K562 (cell line): ENCODE measurements at regions of chr7 and their contacts with region 1.

Region 1: DNA sequence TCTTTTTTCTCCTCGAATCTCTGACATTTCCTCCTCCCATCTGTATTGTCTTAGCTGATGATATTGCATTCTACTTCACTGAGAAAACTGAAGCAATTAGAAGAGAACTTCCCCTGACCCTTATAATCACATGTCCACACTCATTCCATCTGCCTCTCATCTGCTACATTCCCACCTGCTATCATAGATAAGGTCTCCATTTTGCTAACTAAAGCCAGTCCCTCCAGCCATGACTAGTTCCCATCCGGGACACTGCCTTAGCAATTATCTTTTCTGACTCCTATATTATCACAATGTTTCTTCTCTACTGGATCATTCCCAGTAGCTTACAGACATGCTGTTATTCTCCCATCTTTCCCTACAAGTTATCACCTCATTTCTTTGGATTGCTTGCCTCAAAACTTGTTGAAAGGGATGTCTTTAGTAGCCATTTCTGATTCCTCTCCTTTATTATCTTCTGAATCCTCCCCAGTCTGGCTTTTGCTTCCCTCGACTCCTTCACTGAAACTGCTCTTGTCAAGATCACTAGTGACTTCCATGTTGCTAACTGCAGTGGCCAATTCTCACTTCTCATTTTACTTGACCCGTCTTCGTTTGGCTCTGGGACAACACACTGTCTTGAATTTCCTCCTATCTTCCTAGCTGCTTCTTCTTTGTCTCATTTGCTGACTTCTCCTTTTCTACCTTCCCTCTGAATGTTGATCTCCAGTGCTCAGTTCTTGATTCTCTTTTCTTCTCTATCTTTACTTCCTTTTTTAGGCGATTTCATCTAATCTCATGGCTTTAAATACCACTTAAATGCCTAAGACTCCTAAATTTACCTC is 35.9 kb downstream of the FZD1 start:
- DNase-seq: peak; percentile 79 to 95 (median 88)
- ATAC-seq: peak; percentile 92
- H3K4me3 ChIP-seq: no peak overlapping the region
- H3K27ac ChIP-seq: peak overlapping the region; percentile 90
- H3K4me1 ChIP-seq: peaks cover 12 to 24% of the 10 kb centered on the region in 2 experiments; a peak in 4 of 5 replicates
- H3K27me3 ChIP-seq: no peaks in the 10 kb centered on the region
- CTCF ChIP-seq: no peak
- EP300 ChIP-seq: peak; percentile 99
- POLR2A ChIP-seq: 0 out of 2 replicates have a peak, but pooled peaks have one; percentile 53
- RAD21 ChIP-seq: no peak; a peak in 1 of 4 replicates

Region 2: GRCh38 chr7:90346336-90347125 is 953.6 kb before region 1 on chr7 and contains the start of gene GTPBP10:
- CTCF ChIA-PET with region 1: no interaction called
- POLR2A ChIA-PET with region 1: no interaction called
- in situ Hi-C with region 1: no loop called
- intact Hi-C with region 1: loop called (anchors 5 kb)
- DNase-seq: peak; percentile 95 to 99 (median 97)
- ATAC-seq: peak; percentile 92
- H3K4me3 ChIP-seq: peak within 1 kb of the TSS; percentile 77
- H3K27ac ChIP-seq: peak within 1 kb of the TSS; percentile 95
- H3K4me1 ChIP-seq: peaks cover 8 to 14% of the 10 kb centered on the region in 2 experiments; a peak in 3 of 5 replicates
- H3K27me3 ChIP-seq: no peaks in the 10 kb centered on the region
- CTCF ChIP-seq: peak; percentile 86 to 95 (median 91)
- EP300 ChIP-seq: peak; percentile 8; the same call in 1 of the 2 replicates
- POLR2A ChIP-seq: peak; percentile 98
- RAD21 ChIP-seq: no peak
- polyA plus RNA-seq, gene GTPBP10: 87.7 to 87.9 TPM

Region 3: DNA sequence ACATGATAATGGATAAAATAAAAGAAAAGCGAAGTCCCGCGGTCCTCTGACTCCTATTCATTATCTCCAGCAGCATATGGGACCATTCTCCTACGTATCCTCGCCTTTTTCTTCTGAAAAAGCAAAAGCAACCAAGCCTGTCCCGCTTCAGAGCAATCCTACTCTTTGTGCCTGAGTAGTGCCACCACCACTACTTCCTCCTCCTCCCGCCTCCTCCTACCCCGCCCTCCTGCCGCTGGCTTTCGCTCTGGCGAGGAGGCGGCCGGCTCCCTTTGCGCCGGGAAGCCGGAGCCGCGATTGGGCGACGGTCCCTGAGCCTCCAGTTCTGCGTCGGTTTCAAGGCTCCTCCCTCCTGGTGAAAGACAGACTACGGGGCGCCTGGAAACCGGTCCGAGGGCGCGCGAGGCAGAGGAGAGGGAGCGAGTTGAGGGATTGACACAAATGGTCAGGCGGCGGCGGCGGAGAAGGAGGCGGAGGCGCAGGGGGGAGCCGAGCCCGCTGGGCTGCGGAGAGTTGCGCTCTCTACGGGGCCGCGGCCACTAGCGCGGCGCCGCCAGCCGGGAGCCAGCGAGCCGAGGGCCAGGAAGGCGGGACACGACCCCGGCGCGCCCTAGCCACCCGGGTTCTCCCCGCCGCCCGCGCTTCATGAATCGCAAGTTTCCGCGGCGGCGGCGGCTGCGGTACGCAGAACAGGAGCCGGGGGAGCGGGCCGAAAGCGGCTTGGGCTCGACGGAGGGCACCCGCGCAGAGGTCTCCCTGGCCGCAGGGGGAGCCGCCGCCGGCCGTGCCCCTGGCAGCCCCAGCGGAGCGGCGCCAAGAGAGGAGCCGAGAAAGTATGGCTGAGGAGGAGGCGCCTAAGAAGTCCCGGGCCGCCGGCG is 35.9 kb before region 1 on chr7 and contains the start of gene FZD1:
- CTCF ChIA-PET with region 1: no interaction called
- POLR2A ChIA-PET with region 1: interaction called, 8 read pairs
- in situ Hi-C with region 1: no loop called
- intact Hi-C with region 1: loop called (anchors 1 kb)
- DNase-seq: peak; percentile 90 to 99 (median 91)
- ATAC-seq: peak; percentile 94
- H3K4me3 ChIP-seq: peak within 1 kb of the TSS; percentile 80
- H3K27ac ChIP-seq: peak within 1 kb of the TSS; percentile 77
- H3K4me1 ChIP-seq: peaks cover 3 to 37% of the 10 kb centered on the region in 2 experiments; a peak in 3 of 5 replicates
- H3K27me3 ChIP-seq: no peaks in the 10 kb centered on the region
- CTCF ChIP-seq: no peak
- EP300 ChIP-seq: peak; percentile 62
- POLR2A ChIP-seq: peak; percentile 89
- RAD21 ChIP-seq: peak in 1 of 2 experiments; percentile 16; a peak in 3 of 4 replicates
- polyA plus RNA-seq, gene FZD1: 0.25 to 0.27 TPM

Region 4: GRCh38 chr7:91288208-91288824 is 11.8 kb before region 1 on chr7:
- CTCF ChIA-PET with region 1: no interaction called
- POLR2A ChIA-PET with region 1: interaction called, 10 read pairs
- in situ Hi-C with region 1: no loop called
- intact Hi-C with region 1: no loop called
- DNase-seq: peak; percentile 47 to 81 (median 54)
- ATAC-seq: peak; percentile 93
- H3K4me3 ChIP-seq: no peak overlapping the region
- H3K27ac ChIP-seq: no peak overlapping the region
- H3K4me1 ChIP-seq: no peaks in the 10 kb centered on the region
- H3K27me3 ChIP-seq: no peaks in the 10 kb centered on the region; a peak in 1 of 5 replicates
- CTCF ChIP-seq: peak; percentile 74 to 85 (median 82)
- EP300 ChIP-seq: no peak
- POLR2A ChIP-seq: no peak
- RAD21 ChIP-seq: peak; percentile 66 to 83

Region 5: DNA sequence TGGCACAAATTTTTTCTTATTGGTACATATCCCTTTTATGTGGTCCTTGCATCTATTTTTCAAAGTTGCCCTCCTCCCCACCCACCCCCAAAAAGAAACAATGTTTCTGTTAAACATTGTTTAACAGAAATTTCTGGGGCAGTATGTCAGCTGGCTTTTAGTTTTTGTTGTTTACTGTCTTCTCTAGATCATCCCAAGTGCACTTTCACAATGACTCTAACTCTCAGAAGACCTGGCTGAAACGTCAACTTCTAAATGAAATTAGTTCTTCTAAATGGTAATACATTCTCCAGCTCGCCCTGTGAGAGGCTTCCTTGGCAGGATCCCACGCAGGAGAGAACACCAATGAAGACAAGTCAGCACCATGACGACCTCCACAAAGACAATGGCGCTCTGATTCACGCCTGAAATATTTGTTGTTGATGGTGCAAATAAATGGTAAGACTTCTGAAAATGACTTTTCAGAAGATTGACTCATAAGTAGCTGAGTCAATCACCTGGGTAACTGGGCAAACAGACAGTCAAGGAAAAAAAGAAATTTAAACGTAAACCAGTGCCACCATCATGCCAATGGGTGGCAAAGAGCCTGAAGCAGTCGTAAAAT is 257.7 kb after region 1 on chr7:
- CTCF ChIA-PET with region 1: no interaction called
- POLR2A ChIA-PET with region 1: no interaction called
- in situ Hi-C with region 1: no loop called
- intact Hi-C with region 1: loop called (anchors 5 kb)
- DNase-seq: no peak
- ATAC-seq: no peak
- H3K4me3 ChIP-seq: no peak overlapping the region
- H3K27ac ChIP-seq: no peak overlapping the region
- H3K4me1 ChIP-seq: peaks cover 3 to 29% of the 10 kb centered on the region in 2 experiments; a peak in 4 of 5 replicates
- H3K27me3 ChIP-seq: peaks cover 0 to 4% of the 10 kb centered on the region in 2 experiments; a peak in 1 of 5 replicates
- CTCF ChIP-seq: no peak
- EP300 ChIP-seq: no peak
- POLR2A ChIP-seq: no peak
- RAD21 ChIP-seq: no peak